Calu3 (cell line): ENCODE measurements at regions of chr9 and their contacts with region 1.

Region 1: GRCh38 chr9:893843-894420 is 52.4 kb downstream of the DMRT1 start:
- DNase-seq: peak; percentile 58
- H3K4me3 Mint-ChIP-seq: no peak overlapping the region
- H3K27ac Mint-ChIP-seq: no peak overlapping the region
- H3K4me1 Mint-ChIP-seq: no peaks in the 10 kb centered on the region
- H3K27me3 Mint-ChIP-seq: peaks cover 27% of the 10 kb centered on the region
- CTCF ChIP-seq: peak; percentile 54

Region 2: GRCh38 chr9:1009101-1009707 is 115.3 kb after region 1 on chr9:
- CTCF ChIA-PET with region 1: interaction called, 11 read pairs
- intact Hi-C with region 1: loop called (anchors 1 kb)
- DNase-seq: peak; percentile 82
- H3K4me3 Mint-ChIP-seq: no peak overlapping the region
- H3K27ac Mint-ChIP-seq: no peak overlapping the region
- H3K4me1 Mint-ChIP-seq: no peaks in the 10 kb centered on the region
- H3K27me3 Mint-ChIP-seq: peaks cover 12% of the 10 kb centered on the region
- CTCF ChIP-seq: peak; percentile 77